ENCODE measurements at regions of chr17 and their contacts with region 1.

Region 1: GRCh38 chr17:48307814-48308411 is 122.1 kb downstream of the SKAP1 start:
- DNase-seq: peak in 1 of 2 donors; percentile 18
- ATAC-seq: no peak
- H3K4me3 ChIP-seq: no peak overlapping the region
- H3K27ac ChIP-seq: no peak overlapping the region
- H3K4me1 ChIP-seq: no peaks in the 10 kb centered on the region
- H3K27me3 ChIP-seq: peaks cover 31 to 41% (median 39%) of the 10 kb centered on the region in 3 donors
- CTCF ChIP-seq: peak; percentile 42 to 76 (median 51)
- POLR2A ChIP-seq: no peak

Region 2: GRCh38 chr17:48618256-48618897 is 310.5 kb after region 1 on chr17:
- in situ Hi-C with region 1: loop called in 1 of 4 experiments (anchors 10 kb)
- intact Hi-C with region 1: loop called (anchors 2 kb)
- DNase-seq: peak; percentile 64 to 76
- ATAC-seq: peak; percentile 89 to 90
- H3K4me3 ChIP-seq: peak overlapping the region in 1 of 4 donors; percentile 8
- H3K27ac ChIP-seq: no peak overlapping the region
- H3K4me1 ChIP-seq: no peaks in the 10 kb centered on the region
- H3K27me3 ChIP-seq: peaks cover 98 to 99% (median 99%) of the 10 kb centered on the region in 3 donors
- CTCF ChIP-seq: peak; percentile 93 to 98 (median 97)
- POLR2A ChIP-seq: no peak

Region 3: DNA sequence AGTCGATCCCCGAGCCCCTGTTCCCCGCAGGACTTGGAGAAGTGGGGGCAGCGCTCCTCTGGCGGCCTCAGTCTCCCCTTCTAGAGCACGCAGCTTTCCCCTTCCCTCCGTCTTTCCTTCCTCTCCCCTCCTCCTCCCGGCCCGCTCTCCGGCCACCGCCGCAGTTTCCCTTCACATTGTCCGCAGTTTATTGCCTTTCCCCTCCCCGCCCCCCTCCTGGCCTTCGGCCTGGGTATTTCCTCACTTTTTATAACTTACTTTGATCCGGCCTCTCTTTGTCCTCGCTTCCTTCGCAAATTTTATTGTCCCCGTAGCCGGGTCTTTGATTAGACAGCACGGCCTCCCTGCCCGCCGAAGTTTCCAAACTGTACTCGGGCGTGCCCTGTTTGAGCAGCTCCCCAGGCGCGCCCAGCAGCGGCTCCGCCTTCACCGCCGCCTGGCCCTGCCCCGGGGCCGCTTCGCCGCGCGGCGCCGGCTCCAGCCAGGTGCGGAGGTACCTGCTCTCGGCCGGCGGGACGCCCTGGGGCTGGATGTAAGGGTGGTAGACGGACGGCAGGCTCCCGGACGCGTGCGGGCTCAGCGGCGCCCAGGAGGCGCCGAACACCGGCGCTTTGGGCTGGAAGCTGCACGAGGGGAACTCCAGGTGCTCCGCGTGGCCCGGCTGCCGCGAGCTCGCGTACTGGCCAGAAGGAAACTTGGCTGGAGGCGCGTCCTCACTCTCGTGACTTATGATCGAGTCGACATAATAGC is 317.8 kb after region 1 on chr17:
- in situ Hi-C with region 1: loop called in 1 of 4 experiments (anchors 10 kb)
- intact Hi-C with region 1: no loop called
- DNase-seq: no peak
- ATAC-seq: peak in 1 of 2 donors; percentile 30
- H3K4me3 ChIP-seq: peak overlapping the region; percentile 39 to 53 (median 48)
- H3K27ac ChIP-seq: no peak overlapping the region
- H3K4me1 ChIP-seq: peaks cover 13 to 26% of the 10 kb centered on the region in 2 donors
- H3K27me3 ChIP-seq: peaks cover 94 to 100% (median 98%) of the 10 kb centered on the region in 3 donors
- CTCF ChIP-seq: no peak
- POLR2A ChIP-seq: no peak